Heart right ventricle (tissue), 16 donors: ENCODE measurements at regions of chr1 and their contacts with region 1.

Region 1: DNA sequence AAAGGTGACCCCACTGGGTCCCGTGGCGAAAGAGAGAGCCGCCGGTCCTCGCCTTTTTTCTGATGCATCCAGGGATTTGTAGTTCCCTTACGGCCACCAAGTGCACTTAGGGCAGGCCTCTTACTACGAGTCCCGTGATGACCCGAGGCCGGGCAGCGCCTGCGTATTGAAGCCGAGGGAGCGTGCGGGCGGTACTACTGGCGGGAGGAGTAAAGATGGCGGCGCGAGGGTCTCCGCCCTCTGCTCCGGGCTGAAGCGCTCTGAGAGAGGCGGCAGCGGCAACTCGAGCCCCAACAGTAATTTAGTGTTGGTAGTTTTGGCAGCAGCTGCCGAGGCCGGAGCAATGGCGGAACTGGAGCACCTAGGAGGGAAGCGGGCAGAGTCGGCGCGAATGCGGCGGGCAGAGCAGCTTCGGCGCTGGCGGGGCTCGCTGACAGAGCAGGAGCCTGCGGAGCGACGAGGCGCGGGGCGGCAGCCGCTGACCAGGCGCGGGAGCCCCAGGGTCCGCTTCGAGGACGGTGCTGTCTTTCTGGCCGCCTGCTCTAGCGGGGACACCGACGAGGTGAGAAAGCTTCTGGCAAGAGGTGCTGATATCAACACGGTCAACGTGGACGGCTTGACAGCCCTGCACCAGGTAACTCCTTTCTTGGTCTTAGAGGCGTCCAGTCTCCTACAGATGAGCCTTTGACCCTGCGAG is at the start of gene PPP1R12B:
- DNase-seq: peak; percentile 96 to 98
- ATAC-seq: peak; percentile 98 to 100 (median 99)
- H3K4me3 ChIP-seq: peak within 1 kb of the TSS; percentile 71 to 97 (median 88)
- H3K27ac ChIP-seq: peak within 1 kb of the TSS; percentile 69 to 96 (median 92)
- H3K4me1 ChIP-seq: peaks cover 0 to 45% (median 20%) of the 10 kb centered on the region in 9 donors
- H3K27me3 ChIP-seq: no peaks in the 10 kb centered on the region
- CTCF ChIP-seq: no peak
- total RNA-seq, gene PPP1R12B: 447 to 969 (median 632) TPM

Region 2: DNA sequence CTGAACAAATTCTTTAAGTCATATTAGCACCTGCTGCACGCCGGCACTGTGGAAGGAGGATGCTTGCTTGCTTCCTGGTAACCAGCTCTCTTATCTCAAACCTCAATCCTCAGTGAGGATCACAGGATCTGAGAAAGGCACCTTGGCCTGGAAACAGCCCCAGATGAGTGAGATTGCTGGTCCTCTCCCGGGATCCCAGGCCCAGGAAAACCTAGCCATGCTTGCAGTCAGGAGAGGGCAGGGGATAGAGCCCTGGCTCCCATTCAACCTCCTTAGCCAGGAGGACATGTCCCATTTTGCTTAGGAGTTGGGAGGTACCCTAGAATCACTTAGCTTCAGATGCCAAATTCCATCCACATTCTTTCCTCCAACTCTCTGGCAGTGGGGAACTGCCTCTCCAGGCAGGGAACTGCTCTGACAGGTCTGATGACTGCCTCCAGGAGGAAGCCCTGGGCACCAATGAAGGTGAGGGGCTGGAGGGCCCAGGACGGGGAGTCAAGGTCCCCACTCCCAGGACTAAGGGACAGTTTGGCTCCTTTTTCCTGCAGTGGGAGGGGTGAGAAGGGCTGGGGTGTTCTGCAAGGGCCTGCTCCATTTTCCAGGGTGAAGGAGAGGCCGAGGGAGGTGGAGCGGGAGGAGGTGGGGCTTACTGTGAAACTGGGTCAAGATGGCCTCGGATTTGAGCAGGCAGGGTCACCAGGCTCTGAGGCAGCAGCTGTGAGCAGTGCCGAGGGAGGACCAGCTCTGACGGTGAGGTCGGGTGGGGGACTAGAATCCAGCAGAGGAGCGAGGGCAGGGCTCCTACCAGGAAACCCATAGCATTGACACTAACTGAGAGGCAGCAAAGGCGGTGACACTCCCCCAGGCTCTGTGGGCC is 216.4 kb before region 1 on chr1:
- intact Hi-C with region 1: no loop called
- DNase-seq: peak; percentile 58 to 64
- ATAC-seq: peak; percentile 61 to 84 (median 74)
- H3K4me3 ChIP-seq: peak overlapping the region in 4 of 10 donors; percentile 2 to 25 (median 16)
- H3K27ac ChIP-seq: peak overlapping the region in 9 of 10 donors; percentile 57 to 81 (median 76)
- H3K4me1 ChIP-seq: peaks cover 4 to 41% (median 19%) of the 10 kb centered on the region in 9 donors
- H3K27me3 ChIP-seq: no peaks in the 10 kb centered on the region
- CTCF ChIP-seq: no peak

Region 3: GRCh38 chr1:202416641-202417040 is 68.0 kb after region 1 on chr1:
- intact Hi-C with region 1: loop called in 1 of 10 experiments (anchors 5 kb)
- DNase-seq: no peak
- ATAC-seq: peak in 1 of 8 donors; percentile 43
- H3K4me3 ChIP-seq: no peak overlapping the region
- H3K27ac ChIP-seq: peak overlapping the region in 4 of 10 donors; percentile 39 to 55 (median 50)
- H3K4me1 ChIP-seq: peaks cover 0 to 49% (median 29%) of the 10 kb centered on the region in 9 donors
- H3K27me3 ChIP-seq: no peaks in the 10 kb centered on the region
- CTCF ChIP-seq: no peak

Region 4: DNA sequence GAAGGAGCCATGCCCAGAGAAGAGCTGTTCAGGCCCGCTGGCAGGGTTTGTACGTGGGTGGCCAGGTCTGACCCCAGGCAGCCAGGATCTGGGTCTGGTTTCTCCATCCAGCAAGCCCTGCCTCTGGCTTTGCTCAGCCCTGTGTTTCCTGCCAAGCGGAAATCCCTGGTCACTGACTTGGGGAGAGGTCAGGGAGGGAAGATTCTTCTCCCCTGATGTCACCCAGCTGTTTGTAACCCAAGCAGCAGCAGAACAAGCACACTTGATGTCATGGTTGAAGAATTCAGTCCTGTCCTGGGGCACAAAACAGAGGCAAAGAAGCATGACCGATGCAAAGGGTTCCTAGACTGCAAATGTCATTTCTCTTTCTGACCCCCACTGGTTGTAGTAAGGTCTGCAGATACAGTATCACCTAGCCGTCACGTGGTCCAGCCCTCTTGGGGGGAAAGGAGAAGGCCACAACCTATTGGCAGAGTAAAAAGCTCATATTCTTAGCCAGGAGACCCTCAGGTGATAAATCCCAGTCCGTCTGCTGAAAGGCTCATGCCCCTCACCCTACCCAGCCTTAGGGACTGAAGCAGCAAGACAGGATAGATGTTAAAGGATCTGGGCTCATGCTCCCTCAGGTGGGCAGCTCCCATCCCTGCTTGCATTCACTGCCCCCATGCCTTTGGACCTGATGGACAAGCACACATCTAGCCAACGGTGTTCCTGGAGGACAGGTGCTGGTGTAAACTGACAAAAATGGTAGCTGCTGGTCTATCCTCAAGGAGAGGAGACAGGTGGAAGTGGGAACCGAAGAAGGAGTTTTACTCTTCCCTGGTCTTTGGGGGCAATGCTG is 240.8 kb after region 1 on chr1:
- intact Hi-C with region 1: loop called in 1 of 10 experiments (anchors 10 kb)
- DNase-seq: peak; percentile 81 to 94
- ATAC-seq: peak; percentile 85 to 95 (median 93)
- H3K4me3 ChIP-seq: no peak overlapping the region
- H3K27ac ChIP-seq: peak overlapping the region; percentile 78 to 96 (median 90)
- H3K4me1 ChIP-seq: peaks cover 34 to 99% (median 80%) of the 10 kb centered on the region in 9 donors
- H3K27me3 ChIP-seq: peaks cover 0 to 67% (median 0%) of the 10 kb centered on the region in 7 donors
- CTCF ChIP-seq: peak in 2 of 9 donors; percentile 23 to 34

Region 5: GRCh38 chr1:202625416-202626360 is 277.0 kb after region 1 on chr1:
- intact Hi-C with region 1: loop called in 2 of 10 experiments (anchors 5 to 10 kb)
- DNase-seq: peak; percentile 63 to 79
- ATAC-seq: peak; percentile 71 to 87 (median 80)
- H3K4me3 ChIP-seq: no peak overlapping the region
- H3K27ac ChIP-seq: peak overlapping the region in 1 of 10 donors; percentile 30
- H3K4me1 ChIP-seq: peaks cover 2 to 38% (median 29%) of the 10 kb centered on the region in 9 donors
- H3K27me3 ChIP-seq: peaks cover 0 to 70% (median 2%) of the 10 kb centered on the region in 7 donors
- CTCF ChIP-seq: peak; percentile 53 to 83 (median 72)

Region 6: DNA sequence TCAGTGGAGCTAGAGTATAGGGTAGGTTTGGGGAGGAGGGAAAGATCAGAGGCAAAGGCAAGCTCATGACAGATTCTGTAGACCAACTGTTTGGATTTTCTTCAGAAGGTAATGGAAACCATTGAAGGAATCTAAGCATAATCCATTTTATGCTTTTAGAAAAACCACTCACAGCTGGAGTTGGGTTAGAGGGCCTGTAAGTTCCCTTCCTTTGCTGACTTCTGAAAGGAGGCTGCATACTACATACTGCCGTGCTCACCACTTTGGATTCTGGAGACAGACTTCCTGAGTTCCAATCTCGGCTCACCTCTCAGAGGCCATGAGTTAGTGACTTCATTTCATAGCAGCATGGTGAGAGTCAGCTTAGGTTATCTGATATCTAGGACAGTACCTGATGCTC is 368.0 kb after region 1 on chr1:
- intact Hi-C with region 1: loop called in 6 of 10 experiments (anchors 2 to 10 kb)
- DNase-seq: no peak
- ATAC-seq: no peak
- H3K4me3 ChIP-seq: no peak overlapping the region
- H3K27ac ChIP-seq: no peak overlapping the region
- H3K4me1 ChIP-seq: peaks cover 0 to 9% (median 0%) of the 10 kb centered on the region in 9 donors
- H3K27me3 ChIP-seq: peaks cover 0 to 79% (median 3%) of the 10 kb centered on the region in 7 donors
- CTCF ChIP-seq: no peak

Region 7: GRCh38 chr1:203572134-203572625 is 1223.5 kb after region 1 on chr1:
- intact Hi-C with region 1: loop called in 1 of 10 experiments (anchors 5 kb)
- DNase-seq: no peak
- ATAC-seq: peak in 4 of 8 donors; percentile 31 to 47 (median 32)
- H3K4me3 ChIP-seq: no peak overlapping the region
- H3K27ac ChIP-seq: no peak overlapping the region
- H3K4me1 ChIP-seq: no peaks in the 10 kb centered on the region
- H3K27me3 ChIP-seq: no peaks in the 10 kb centered on the region
- CTCF ChIP-seq: no peak